ENCODE measurements at regions of chr7 and their contacts with region 1.

Region 1: DNA sequence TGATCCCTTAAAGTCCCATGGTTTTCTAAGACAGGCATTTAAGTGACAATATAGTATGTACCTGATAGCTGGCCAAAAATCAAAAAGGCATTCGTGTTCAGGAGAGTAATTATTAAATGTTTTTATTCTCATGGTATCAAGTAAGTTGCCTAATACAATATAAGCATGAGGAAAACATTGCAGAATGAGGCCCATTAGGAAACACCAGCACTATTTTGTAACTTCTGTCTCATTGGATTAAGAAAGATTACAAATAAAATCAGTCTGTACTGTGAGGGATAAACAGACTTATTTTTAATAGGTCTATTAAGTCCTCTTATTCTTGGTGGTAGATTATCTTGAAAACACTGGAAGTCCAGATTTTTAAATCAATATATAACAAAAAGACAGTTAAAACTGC is 110.1 kb downstream of the SNX13 start:
- DNase-seq: no peak
- H3K4me3 ChIP-seq: no peak overlapping the region
- H3K27ac ChIP-seq: no peak overlapping the region
- H3K4me1 ChIP-seq: peaks cover 13% of the 10 kb centered on the region
- H3K27me3 ChIP-seq: no peaks in the 10 kb centered on the region
- CTCF ChIP-seq: no peak

Region 2: GRCh38 chr7:18109762-18110161 is 279.6 kb after region 1 on chr7:
- CTCF ChIA-PET with region 1: no interaction called
- POLR2A ChIA-PET with region 1: interaction called, 16 read pairs
- intact Hi-C with region 1: no loop called
- DNase-seq: no peak
- H3K4me3 ChIP-seq: no peak overlapping the region
- H3K27ac ChIP-seq: no peak overlapping the region
- H3K4me1 ChIP-seq: no peaks in the 10 kb centered on the region
- H3K27me3 ChIP-seq: no peaks in the 10 kb centered on the region
- CTCF ChIP-seq: no peak